Activated CD4-positive, alpha-beta memory T cell treated with anti-CD3 and anti-CD28 coated beads for 36 hours (primary cell): ENCODE measurements at regions of chr11 and their contacts with region 1.

Region 1: DNA sequence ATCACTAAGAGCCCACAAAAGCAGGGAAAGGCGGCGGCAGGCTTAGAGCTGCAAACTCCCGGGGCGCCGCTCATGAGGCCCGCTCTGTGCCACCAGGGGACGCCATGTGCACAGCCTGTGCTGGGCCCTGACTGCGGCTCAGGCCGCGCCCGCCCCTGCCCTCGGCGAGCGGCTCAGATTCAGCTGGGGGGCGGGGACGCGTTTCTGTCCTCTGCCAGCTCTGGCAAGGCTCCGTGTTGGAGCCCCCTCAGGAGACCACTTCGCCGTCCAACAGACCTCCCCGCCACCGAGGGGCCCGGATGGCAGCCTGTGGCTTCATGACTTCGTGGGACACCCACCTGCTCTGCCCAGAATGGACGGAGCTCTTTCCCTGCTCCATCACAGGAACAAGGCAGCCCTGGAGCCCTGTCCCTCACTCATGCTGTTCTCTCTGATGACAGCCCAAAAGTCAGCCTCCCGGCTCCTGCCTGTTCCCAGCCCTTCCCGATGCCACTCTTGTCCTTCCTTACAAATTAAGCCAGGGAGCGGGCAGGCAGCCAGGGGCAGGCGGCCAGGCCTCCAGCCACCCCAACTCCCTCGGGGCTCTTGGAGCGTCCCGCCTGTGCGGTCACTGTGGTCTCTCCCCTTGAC is 69.1 kb downstream of the NAT10 start:
- DNase-seq: peak; percentile 88
- H3K4me3 Mint-ChIP-seq: no peak overlapping the region
- H3K27ac Mint-ChIP-seq: no peak overlapping the region
- H3K4me1 Mint-ChIP-seq: peaks cover 15% of the 10 kb centered on the region
- H3K27me3 Mint-ChIP-seq: peaks cover 2% of the 10 kb centered on the region

Region 2: DNA sequence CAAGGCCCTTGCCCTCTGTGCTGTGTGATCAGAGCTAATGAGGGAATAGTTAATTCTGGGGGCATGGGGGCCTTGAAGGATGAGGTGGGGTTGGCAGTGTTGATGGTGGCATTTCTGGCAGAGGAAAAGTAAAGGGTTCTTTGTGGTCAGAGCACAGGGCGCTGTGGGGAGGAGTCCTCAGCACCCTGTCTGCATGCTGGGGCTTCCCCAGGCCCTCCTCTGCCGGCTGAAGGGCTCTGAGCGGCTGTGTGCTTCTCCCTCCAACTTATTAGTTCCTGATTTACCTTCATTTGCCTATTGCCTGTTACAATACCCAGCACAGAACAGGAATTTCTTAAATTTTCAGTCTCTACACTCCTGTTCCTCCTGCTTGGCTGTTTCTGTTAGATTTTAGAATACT is 794.6 kb before region 1 on chr11:
- CTCF ChIA-PET with region 1: no interaction called
- POLR2A ChIA-PET with region 1: no interaction called
- intact Hi-C with region 1: no loop called
- DNase-seq: no peak
- H3K4me3 Mint-ChIP-seq: no peak overlapping the region
- H3K27ac Mint-ChIP-seq: no peak overlapping the region
- H3K4me1 Mint-ChIP-seq: no peaks in the 10 kb centered on the region
- H3K27me3 Mint-ChIP-seq: peaks cover 28% of the 10 kb centered on the region

Region 3: DNA sequence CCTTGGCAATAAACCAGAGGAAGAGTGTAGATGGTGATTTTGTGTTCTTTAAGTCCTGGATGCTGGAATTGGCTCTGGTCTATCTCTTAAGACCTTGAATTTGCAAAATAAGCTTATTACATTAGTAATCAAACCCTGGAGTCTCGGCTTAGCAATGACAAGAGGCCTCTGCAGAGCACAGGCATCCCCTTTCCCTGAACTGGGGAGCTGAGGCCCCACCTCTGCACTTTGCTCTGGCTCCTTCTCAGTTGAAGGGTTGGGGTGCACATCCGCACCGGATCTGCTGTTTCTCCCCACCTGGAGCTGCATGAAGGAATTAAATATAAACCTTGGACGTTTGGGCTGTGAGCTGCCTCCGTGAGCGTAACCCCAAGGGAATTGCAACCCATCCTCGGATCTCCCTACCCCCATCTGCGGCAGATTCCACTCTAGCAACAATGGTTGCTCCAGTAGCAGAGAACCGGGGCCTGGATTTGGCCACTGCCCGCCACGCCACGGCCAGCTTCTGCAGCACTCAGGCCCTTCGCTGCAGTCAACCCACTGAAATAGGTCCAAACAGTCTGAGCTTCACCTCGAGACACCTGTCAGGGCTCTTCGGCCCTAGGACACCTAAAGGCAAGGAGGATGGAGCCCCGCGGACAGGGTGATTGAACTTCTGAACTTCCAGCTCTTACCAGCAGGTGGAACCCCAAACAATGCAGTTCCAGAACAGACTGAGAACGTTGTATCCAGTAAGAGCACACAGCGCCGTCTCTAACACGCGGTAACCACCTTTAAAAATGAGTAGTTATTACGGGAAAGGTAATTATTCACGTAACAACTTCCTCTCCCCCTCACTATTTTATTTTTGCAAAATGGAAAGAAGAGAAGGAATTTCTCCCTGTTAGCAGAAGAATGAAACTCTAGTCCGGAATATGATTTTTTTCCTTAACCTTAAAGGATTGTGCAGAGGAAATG is 177.8 kb before region 1 on chr11:
- CTCF ChIA-PET with region 1: interaction called, 26 read pairs
- POLR2A ChIA-PET with region 1: no interaction called
- intact Hi-C with region 1: loop called (anchors 5 kb)
- DNase-seq: peak; percentile 81
- H3K4me3 Mint-ChIP-seq: no peak overlapping the region
- H3K27ac Mint-ChIP-seq: no peak overlapping the region
- H3K4me1 Mint-ChIP-seq: peaks cover 11% of the 10 kb centered on the region
- H3K27me3 Mint-ChIP-seq: peaks cover 16% of the 10 kb centered on the region

Region 4: GRCh38 chr11:34150446-34151138 is 23.9 kb before region 1 on chr11:
- CTCF ChIA-PET with region 1: interaction called, 10 read pairs
- POLR2A ChIA-PET with region 1: no interaction called
- intact Hi-C with region 1: no loop called
- DNase-seq: no peak
- H3K4me3 Mint-ChIP-seq: no peak overlapping the region
- H3K27ac Mint-ChIP-seq: no peak overlapping the region
- H3K4me1 Mint-ChIP-seq: no peaks in the 10 kb centered on the region
- H3K27me3 Mint-ChIP-seq: no peaks in the 10 kb centered on the region

Region 5: DNA sequence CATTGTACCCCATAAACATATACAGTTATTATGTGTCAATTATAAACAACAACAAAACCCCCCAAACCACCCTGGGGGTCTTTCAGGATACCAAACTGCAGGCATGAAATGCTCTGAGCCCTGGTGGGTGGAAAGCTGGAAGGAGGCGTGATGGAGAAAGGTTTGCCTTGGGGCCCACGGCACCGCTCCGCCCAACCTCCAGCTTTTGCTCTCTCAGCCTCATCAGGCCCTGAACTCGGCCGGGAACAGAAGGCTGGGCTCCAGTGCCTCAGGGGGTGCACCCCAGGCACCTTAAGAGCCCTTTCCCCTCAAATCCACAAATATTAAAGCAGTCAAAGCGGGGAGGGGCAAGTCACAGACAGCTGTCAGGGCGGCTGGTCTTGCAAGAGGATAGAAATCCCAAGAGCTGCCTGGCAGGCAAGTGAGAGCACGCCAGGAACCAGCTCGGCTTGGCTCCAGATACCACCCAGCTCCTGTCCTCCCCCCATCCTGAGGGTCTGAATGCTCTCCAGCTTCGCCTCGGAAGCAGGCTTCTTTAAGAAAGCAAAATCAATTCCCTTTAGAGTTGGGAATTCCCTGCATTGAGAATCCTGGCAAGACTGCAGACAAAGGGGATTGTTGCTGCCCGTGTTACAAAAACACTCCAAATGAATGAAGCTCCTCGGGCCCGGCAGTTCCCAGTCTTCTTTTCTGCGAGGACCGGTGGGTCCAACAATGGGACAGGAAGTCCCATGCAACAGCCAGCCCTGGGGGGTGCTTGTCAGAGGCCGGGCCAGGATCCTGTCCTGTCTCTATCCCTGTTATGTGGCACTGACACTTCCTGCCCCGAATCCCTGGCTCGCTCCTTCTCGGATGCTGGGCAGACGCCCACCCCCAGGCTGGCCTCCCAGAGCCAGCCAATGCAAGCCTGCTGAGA is 11.7 kb after region 1 on chr11:
- CTCF ChIA-PET with region 1: interaction called, 32 read pairs
- POLR2A ChIA-PET with region 1: no interaction called
- intact Hi-C with region 1: no loop called
- DNase-seq: no peak
- H3K4me3 Mint-ChIP-seq: no peak overlapping the region
- H3K27ac Mint-ChIP-seq: no peak overlapping the region
- H3K4me1 Mint-ChIP-seq: peaks cover 4% of the 10 kb centered on the region
- H3K27me3 Mint-ChIP-seq: peaks cover 3% of the 10 kb centered on the region

Region 6: DNA sequence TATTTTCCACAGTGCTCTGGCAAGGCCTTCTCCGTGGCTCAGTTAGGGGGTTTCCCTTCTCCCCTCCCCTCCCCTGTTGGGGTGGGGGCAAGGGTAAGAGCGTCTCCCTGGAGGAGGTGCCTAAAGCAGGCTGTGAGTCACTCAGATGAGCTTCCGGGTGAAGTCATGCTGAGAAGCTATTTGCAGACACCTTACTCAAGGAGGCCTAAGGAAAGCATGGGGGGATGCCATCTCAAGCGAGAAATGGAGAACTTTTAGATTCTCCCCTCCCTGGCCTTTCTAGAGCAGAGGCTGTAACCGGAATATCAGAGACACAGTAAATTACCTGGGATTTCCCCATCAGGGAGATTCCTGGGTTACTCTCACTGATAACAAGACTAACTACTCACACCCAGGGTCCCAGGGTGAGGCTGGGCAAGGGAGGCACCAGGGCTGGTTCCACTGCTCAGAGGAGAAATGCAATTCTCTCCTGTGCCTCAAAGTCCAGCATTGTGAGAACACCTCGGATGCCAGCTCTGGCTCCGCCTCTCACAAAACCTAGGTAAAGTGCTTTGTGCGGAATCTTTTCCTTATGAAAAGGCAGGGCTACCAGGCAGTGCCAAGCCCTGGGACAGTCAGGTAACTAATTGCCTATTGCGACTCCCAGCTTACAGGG is 59.7 kb after region 1 on chr11:
- CTCF ChIA-PET with region 1: interaction called, 17 read pairs
- POLR2A ChIA-PET with region 1: interaction called, 5 read pairs
- intact Hi-C with region 1: no loop called
- DNase-seq: peak; percentile 90
- H3K4me3 Mint-ChIP-seq: no peak overlapping the region
- H3K27ac Mint-ChIP-seq: peak overlapping the region; percentile 77
- H3K4me1 Mint-ChIP-seq: peaks cover 46% of the 10 kb centered on the region
- H3K27me3 Mint-ChIP-seq: peaks cover 6% of the 10 kb centered on the region

Region 7: DNA sequence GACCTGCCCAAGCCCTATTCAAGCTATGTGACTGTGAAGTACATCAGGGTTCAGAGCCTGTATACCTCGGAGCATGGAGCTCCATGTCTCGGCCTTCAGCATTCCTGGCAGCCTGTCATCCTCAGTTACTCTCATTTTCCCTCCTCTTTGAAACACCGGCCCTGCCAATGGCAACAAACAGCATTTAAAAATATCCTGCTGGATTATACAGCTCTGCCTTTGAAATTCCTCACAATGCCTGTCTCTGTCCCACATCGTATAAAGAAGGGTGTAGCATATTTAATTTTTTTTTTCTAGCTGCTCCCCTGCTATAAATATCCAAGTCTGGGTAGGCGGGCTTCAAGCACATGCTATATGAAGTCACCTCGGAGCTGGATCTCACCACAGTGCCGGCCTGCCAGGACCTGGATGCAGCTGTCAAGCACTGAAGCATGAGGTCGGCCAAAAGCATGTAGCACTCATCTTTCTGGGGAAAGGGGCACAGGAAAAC is 171.5 kb after region 1 on chr11:
- CTCF ChIA-PET with region 1: interaction called, 21 read pairs
- POLR2A ChIA-PET with region 1: no interaction called
- intact Hi-C with region 1: no loop called
- DNase-seq: no peak
- H3K4me3 Mint-ChIP-seq: no peak overlapping the region
- H3K27ac Mint-ChIP-seq: no peak overlapping the region
- H3K4me1 Mint-ChIP-seq: no peaks in the 10 kb centered on the region
- H3K27me3 Mint-ChIP-seq: peaks cover 3% of the 10 kb centered on the region

Region 8: GRCh38 chr11:34366522-34366921 is 192.0 kb after region 1 on chr11:
- CTCF ChIA-PET with region 1: interaction called, 46 read pairs
- POLR2A ChIA-PET with region 1: no interaction called
- intact Hi-C with region 1: no loop called
- DNase-seq: peak; percentile 35
- H3K4me3 Mint-ChIP-seq: no peak overlapping the region
- H3K27ac Mint-ChIP-seq: no peak overlapping the region
- H3K4me1 Mint-ChIP-seq: peaks cover 11% of the 10 kb centered on the region
- H3K27me3 Mint-ChIP-seq: peaks cover 24% of the 10 kb centered on the region